Head of caudate nucleus (tissue), 42 donors: ENCODE measurements at regions of chr1 and their contacts with region 1.

Region 1: GRCh38 chr1:159936273-159936904 is 9.0 kb downstream of the IGSF9 start:
- DNase-seq: peak in 39 of 42 donors; percentile 27 to 86 (median 62)

Region 2: GRCh38 chr1:159532922-159533321 is 403.5 kb before region 1 on chr1:
- intact Hi-C with region 1: no loop called
- DNase-seq: no peak

Region 3: GRCh38 chr1:160006312-160006940 is 70.0 kb after region 1 on chr1:
- intact Hi-C with region 1: loop called (anchors 2 kb)
- DNase-seq: peak; percentile 19 to 81 (median 65)